Activated CD8-positive, alpha-beta memory T cell treated with anti-CD3 and anti-CD28 coated beads, Interleukin-2, amount 10 ng/mL, durations not matched to agents 7 days and 5 days (primary cell): ENCODE measurements at regions of chr11 and their contacts with region 1.

Region 1: DNA sequence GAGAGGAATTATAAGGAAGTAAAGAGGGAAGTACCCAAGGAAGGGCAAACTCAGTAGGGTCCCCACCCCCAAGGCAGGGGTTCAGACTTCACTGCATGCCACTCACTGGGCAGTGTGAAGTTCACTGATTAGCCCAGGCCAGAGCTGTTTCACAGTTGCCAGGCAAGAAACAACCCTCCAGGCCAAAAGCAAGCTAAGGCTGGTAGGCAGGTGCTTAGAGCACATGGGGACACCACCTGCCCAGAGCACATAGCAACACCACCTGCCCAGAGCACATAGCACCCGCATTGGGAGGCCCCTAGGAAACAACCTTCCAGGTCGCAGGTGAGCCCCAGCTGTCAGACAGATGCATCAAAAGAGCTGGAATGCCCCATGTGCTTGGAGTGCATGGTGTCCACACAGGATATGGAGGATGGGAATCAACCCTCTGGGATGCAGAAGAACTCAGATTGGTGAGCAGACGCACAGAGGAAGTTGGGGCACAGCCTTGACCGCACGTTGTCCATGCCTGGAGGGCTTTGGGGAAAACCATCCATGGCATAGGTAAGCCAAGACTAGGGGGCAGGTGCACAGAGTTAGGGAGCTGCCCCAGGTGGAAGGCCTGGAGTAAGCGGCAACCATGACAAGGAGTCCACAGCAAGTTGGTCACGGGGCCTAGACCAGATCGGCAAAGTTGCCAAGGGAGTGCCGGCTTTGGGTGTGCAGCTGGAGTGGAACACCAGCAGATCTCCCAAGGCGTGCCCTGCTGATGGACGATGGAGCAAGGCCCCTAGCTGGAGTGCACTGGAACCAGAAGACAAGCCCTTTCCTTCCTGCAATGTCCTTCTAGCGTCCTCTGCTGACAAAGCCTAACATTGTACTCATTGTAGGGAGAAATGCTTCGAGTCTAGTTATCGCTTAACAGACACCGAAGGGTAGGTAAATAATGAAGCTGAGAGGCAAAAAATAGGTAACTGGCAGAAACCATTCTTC is 7.8 kb upstream of the TMEM216 start:
- DNase-seq: no peak
- ATAC-seq: no peak
- H3K4me3 Mint-ChIP-seq: no peak overlapping the region
- H3K27ac Mint-ChIP-seq: no peak overlapping the region
- H3K4me1 Mint-ChIP-seq: peaks cover 5% of the 10 kb centered on the region
- H3K27me3 Mint-ChIP-seq: no peaks in the 10 kb centered on the region

Region 2: DNA sequence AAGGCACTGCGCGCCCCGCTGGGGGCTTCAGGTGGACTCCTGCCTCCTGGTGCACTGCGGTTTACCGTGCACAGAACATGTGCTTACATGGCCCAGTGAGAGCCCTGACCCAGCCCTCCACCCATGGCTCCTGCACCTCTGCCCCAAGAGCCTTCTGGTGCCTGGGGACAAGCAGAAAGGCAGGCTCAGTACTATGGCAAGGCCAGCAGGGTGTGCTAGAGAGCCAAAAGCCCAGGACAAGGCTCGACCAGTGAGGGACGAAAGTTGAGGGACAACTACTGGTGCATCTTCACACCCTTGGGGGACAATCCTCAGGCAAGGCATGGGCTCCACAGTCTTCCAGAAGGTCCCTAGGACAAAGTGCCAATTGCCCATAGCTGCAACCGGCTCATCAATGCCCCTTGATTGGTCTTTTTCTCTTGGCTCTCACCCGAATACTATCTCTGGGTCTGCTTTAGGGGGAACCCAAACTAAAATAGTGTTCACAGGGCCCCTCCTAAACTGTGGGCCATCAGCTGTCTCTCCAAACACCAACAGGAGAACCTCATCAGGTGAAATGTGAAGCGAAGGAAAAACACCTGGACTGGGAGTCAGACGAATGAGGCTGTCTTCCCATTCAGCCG is 130.0 kb before region 1 on chr11:
- CTCF ChIA-PET with region 1: interaction called, 46 read pairs
- DNase-seq: peak; percentile 75
- ATAC-seq: peak; percentile 95
- H3K4me3 Mint-ChIP-seq: no peak overlapping the region
- H3K27ac Mint-ChIP-seq: no peak overlapping the region
- H3K4me1 Mint-ChIP-seq: peaks cover 1% of the 10 kb centered on the region
- H3K27me3 Mint-ChIP-seq: no peaks in the 10 kb centered on the region

Region 3: DNA sequence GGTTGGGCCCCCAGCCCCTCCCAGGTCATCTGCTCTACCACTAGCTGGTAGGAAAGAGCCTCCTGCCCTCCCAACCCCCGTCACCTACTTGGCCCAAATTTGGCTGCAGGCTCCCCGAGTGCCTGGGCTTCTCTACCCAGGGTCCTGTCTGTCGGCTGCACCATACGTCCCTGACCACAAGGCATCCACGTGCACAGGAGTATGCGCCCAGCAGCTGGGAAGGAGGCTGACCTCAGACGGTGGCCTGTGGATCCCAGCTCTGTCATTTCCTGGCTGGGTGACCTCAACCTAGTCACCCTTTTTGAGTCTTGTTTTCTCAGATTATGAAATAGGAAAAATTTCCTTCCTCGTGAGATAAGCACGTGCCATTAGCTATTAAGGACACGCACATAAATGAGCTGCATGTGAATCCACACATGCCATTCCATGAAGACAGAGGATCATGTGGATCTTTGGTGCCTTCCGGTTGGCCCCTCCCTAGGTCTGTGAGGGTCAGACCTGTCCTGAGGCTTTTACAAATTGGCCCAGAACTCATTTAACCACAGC is 36.6 kb before region 1 on chr11:
- CTCF ChIA-PET with region 1: interaction called, 12 read pairs
- DNase-seq: no peak
- ATAC-seq: no peak
- H3K4me3 Mint-ChIP-seq: no peak overlapping the region
- H3K27ac Mint-ChIP-seq: no peak overlapping the region
- H3K4me1 Mint-ChIP-seq: no peaks in the 10 kb centered on the region
- H3K27me3 Mint-ChIP-seq: no peaks in the 10 kb centered on the region

Region 4: DNA sequence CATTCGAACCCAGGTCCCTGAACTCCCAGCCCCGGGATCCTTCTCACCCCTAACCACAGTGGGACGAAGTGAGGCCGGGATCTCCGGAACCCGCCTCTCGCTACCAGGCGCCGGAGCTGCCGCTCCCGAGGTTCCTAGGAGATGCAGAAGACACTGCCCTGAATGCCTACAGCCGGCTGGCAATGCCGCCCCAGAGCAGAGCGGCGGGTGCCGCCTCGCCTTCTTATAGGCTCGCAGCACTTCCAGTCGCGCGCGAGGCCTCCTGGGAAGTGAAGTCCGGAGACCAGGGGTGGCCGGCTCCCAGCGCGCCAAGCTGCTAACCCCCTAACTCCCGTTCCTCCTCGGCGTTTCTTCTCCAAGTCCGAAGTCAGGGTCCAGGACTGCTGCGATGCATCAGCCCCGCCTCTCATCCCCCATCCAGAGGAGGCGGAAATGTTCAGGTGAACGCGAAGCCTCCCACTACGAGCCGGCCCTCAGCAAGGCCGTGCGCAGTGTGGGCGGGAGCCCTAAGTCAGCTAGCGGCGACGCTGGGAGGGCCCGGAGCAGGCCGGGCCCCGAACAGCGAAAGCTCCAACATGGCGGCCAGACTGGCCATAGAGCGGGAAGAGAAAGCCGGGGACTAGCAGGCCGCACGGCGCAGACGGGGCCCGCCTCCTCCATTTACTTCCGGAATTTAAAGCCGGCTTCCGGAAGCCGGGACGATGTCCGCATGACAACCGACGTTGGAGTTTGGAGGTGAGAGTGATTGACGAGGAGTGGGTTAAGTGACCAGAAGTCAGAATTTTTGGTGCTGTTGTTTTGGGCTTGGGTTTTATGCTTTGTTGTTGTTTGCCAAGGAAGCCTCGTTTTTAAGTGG is 22.6 kb before region 1 on chr11 and contains the starts of genes CYB561A3 and TMEM138:
- CTCF ChIA-PET with region 1: interaction called, 54 read pairs
- DNase-seq: peak; percentile 96
- ATAC-seq: peak; percentile 95
- H3K4me3 Mint-ChIP-seq: peak within 1 kb of the TSS; percentile 99
- H3K27ac Mint-ChIP-seq: peak within 1 kb of the TSS; percentile 98
- H3K4me1 Mint-ChIP-seq: peaks cover 40% of the 10 kb centered on the region
- H3K27me3 Mint-ChIP-seq: no peaks in the 10 kb centered on the region
- total RNA-seq, gene CYB561A3: 43.9 to 51.2 TPM
- total RNA-seq, gene TMEM138: 48.3 to 60.6 TPM

Region 5: DNA sequence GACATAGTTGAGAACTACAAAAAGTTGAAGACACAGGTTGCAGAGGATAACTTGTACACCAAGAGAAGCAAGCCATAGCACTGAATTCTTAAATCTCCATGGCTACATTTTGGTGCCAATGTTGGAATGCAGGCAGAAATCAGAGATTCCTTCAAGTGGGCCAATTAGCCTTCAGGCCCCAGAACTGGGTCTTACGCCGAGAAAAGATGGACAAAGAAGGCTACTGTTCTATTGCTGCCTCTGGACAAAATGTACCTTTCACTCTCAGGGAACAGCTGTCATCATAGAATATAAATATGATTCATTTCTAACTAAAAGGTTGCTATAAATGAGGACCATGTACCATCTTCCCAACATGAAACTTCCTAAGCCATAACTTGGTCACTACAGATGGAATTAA is 21.5 kb after region 1 on chr11:
- CTCF ChIA-PET with region 1: interaction called, 14 read pairs
- DNase-seq: no peak
- ATAC-seq: no peak
- H3K4me3 Mint-ChIP-seq: no peak overlapping the region
- H3K27ac Mint-ChIP-seq: no peak overlapping the region
- H3K4me1 Mint-ChIP-seq: no peaks in the 10 kb centered on the region
- H3K27me3 Mint-ChIP-seq: no peaks in the 10 kb centered on the region

Region 6: GRCh38 chr11:61453695-61454094 is 69.1 kb after region 1 on chr11:
- CTCF ChIA-PET with region 1: no interaction called
- DNase-seq: no peak
- ATAC-seq: no peak
- H3K4me3 Mint-ChIP-seq: no peak overlapping the region
- H3K27ac Mint-ChIP-seq: no peak overlapping the region
- H3K4me1 Mint-ChIP-seq: no peaks in the 10 kb centered on the region
- H3K27me3 Mint-ChIP-seq: no peaks in the 10 kb centered on the region